Naive thymus-derived CD4-positive, alpha-beta T cell (primary cell): ENCODE measurements at regions of chr21 and their contacts with region 1.

Region 1: GRCh38 chr21:37267269-37268184 is at the start of gene VPS26C:
- DNase-seq: peak; percentile 91 to 98 (median 97)
- ATAC-seq: peak; percentile 93
- H3K4me3 ChIP-seq: peak within 1 kb of the TSS; percentile 95
- H3K4me3 Mint-ChIP-seq: peak within 1 kb of the TSS; percentile 88 to 96 (median 94)
- H3K27ac ChIP-seq: peak within 1 kb of the TSS; percentile 90
- H3K27ac Mint-ChIP-seq: peak within 1 kb of the TSS; percentile 94 to 99 (median 98)
- H3K4me1 ChIP-seq: peaks cover 5 to 7% of the 10 kb centered on the region in 2 donors
- H3K4me1 Mint-ChIP-seq: peaks cover 14 to 62% (median 46%) of the 10 kb centered on the region in 7 donors
- H3K27me3 ChIP-seq: no peaks in the 10 kb centered on the region
- H3K27me3 Mint-ChIP-seq: peaks cover 0 to 11% (median 0%) of the 10 kb centered on the region in 5 donors
- total RNA-seq, gene VPS26C: 46.8 to 83.5 (median 77.7) TPM

Region 2: GRCh38 chr21:36319765-36320420 is 947.6 kb before region 1 on chr21 and contains the start of gene MORC3:
- CTCF ChIA-PET with region 1: no interaction called
- POLR2A ChIA-PET with region 1: no interaction called
- intact Hi-C with region 1: loop called in 1 of 2 experiments (anchors 10 kb)
- DNase-seq: peak; percentile 95 to 98 (median 97)
- ATAC-seq: peak; percentile 96
- H3K4me3 ChIP-seq: peak within 1 kb of the TSS; percentile 78
- H3K4me3 Mint-ChIP-seq: peak within 1 kb of the TSS; percentile 90 to 100 (median 96)
- H3K27ac ChIP-seq: peak within 1 kb of the TSS; percentile 93
- H3K27ac Mint-ChIP-seq: peak within 1 kb of the TSS; percentile 94 to 99 (median 97)
- H3K4me1 ChIP-seq: peaks cover 11 to 22% of the 10 kb centered on the region in 2 donors
- H3K4me1 Mint-ChIP-seq: peaks cover 29 to 40% (median 37%) of the 10 kb centered on the region in 7 donors
- H3K27me3 ChIP-seq: no peaks in the 10 kb centered on the region
- H3K27me3 Mint-ChIP-seq: peaks cover 0 to 5% (median 0%) of the 10 kb centered on the region in 5 donors
- total RNA-seq, gene MORC3: 48.2 to 123 (median 62.0) TPM

Region 3: GRCh38 chr21:37072988-37073416 is 194.5 kb before region 1 on chr21 and contains the starts of genes PIGP and TTC3:
- CTCF ChIA-PET with region 1: no interaction called
- POLR2A ChIA-PET with region 1: no interaction called
- intact Hi-C with region 1: loop called (anchors 1 kb)
- DNase-seq: peak; percentile 93 to 99 (median 97)
- ATAC-seq: peak; percentile 79
- H3K4me3 ChIP-seq: peak within 1 kb of the TSS; percentile 76
- H3K4me3 Mint-ChIP-seq: peak within 1 kb of the TSS; percentile 88 to 100 (median 98)
- H3K27ac ChIP-seq: peak within 1 kb of the TSS; percentile 97
- H3K27ac Mint-ChIP-seq: peak within 1 kb of the TSS; percentile 91 to 100 (median 97)
- H3K4me1 ChIP-seq: peaks cover 22 to 23% of the 10 kb centered on the region in 2 donors
- H3K4me1 Mint-ChIP-seq: peaks cover 30 to 66% (median 59%) of the 10 kb centered on the region in 7 donors
- H3K27me3 ChIP-seq: no peaks in the 10 kb centered on the region
- H3K27me3 Mint-ChIP-seq: peaks cover 0 to 6% (median 0%) of the 10 kb centered on the region in 5 donors
- total RNA-seq, gene PIGP: 9.1 to 26.7 (median 15.3) TPM
- total RNA-seq, gene TTC3: 66.6 to 208 (median 154) TPM

Region 4: DNA sequence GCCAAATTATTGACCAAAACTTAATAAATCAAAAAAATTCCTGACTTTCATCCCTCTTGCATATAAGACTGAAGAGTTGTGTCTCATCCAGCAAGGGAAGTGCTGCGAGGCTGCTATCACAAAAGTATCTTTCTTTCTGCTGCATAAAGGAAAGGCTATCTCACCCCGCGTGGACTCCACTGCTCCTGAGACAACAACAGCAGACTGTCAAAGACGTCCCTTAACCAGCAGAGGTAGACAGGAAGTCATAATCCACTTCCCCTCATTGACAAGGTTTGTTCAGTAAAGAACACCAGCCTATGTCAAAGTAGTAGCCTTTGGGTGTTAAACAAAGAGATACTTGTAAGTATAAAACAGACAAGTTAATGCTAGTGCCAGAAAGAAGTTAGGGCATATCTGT is 29.8 kb before region 1 on chr21:
- CTCF ChIA-PET with region 1: no interaction called
- POLR2A ChIA-PET with region 1: interaction called, 4 read pairs
- intact Hi-C with region 1: loop called in 1 of 2 experiments (anchors 2 kb)
- DNase-seq: peak in 3 of 9 donors; percentile 16 to 21 (median 20)
- ATAC-seq: peak; percentile 60
- H3K4me3 ChIP-seq: no peak overlapping the region
- H3K4me3 Mint-ChIP-seq: peak overlapping the region in 5 of 10 donors; percentile 0 to 68 (median 27)
- H3K27ac ChIP-seq: peak overlapping the region; percentile 26
- H3K27ac Mint-ChIP-seq: peak overlapping the region; percentile 74 to 89 (median 88)
- H3K4me1 ChIP-seq: peaks cover 0 to 16% of the 10 kb centered on the region in 2 donors
- H3K4me1 Mint-ChIP-seq: peaks cover 23 to 57% (median 33%) of the 10 kb centered on the region in 7 donors
- H3K27me3 ChIP-seq: no peaks in the 10 kb centered on the region
- H3K27me3 Mint-ChIP-seq: no peaks in the 10 kb centered on the region

Region 5: DNA sequence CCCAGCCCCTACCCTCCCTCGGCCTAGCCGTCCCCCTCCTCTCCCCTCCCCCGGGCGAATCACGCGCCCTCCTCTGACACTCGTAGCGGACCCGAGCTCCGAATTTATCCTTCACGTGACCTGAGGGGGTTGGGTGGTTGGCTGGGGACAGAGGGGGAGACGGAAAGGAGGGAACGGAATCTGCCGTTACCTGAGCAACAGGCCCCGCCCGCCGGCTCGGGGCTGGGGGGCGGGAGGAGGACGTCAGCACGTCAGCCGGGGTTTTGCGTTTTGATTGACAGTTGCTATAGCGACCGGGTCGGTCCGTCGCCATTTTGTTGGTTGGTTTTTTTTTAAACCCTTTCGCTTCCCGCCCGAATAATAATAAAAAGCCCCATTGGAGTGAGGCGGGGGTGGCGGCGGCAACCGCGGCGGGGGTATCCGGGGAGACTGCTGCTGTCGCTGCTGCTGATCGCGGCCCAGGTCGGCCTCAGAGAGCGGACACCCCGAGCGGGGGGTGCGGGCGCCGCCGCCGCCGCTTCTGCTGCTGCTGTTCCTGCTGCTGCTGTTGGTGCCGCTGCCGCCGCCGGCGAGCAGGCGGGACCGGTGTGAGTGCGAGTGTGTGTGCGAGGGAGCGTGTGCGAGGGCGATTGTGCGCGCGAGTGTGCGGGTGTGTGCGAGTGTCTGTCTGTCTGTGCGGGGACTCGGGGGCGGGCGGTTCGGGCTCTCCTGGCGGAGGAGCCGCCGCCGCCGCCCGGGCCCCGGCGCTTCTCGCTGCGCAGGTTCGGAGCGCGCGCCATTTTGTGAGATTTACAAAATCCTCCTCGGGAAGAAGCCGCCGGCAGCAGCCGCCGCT is 99.2 kb after region 1 on chr21 and contains the start of gene DYRK1A:
- CTCF ChIA-PET with region 1: interaction called, 3 read pairs
- POLR2A ChIA-PET with region 1: interaction called, 37 read pairs
- intact Hi-C with region 1: loop called (anchors 1 kb)
- DNase-seq: peak; percentile 95 to 99 (median 99)
- ATAC-seq: peak; percentile 91
- H3K4me3 ChIP-seq: peak within 1 kb of the TSS; percentile 75
- H3K4me3 Mint-ChIP-seq: peak within 1 kb of the TSS; percentile 93 to 100 (median 100)
- H3K27ac ChIP-seq: peak within 1 kb of the TSS; percentile 99
- H3K27ac Mint-ChIP-seq: peak within 1 kb of the TSS; percentile 98 to 100 (median 100)
- H3K4me1 ChIP-seq: peaks cover 20 to 33% of the 10 kb centered on the region in 2 donors
- H3K4me1 Mint-ChIP-seq: peaks cover 34 to 53% (median 44%) of the 10 kb centered on the region in 7 donors
- H3K27me3 ChIP-seq: no peaks in the 10 kb centered on the region
- H3K27me3 Mint-ChIP-seq: peaks cover 0 to 5% (median 0%) of the 10 kb centered on the region in 5 donors
- total RNA-seq, gene DYRK1A: 86.0 to 142 (median 125) TPM

Region 6: DNA sequence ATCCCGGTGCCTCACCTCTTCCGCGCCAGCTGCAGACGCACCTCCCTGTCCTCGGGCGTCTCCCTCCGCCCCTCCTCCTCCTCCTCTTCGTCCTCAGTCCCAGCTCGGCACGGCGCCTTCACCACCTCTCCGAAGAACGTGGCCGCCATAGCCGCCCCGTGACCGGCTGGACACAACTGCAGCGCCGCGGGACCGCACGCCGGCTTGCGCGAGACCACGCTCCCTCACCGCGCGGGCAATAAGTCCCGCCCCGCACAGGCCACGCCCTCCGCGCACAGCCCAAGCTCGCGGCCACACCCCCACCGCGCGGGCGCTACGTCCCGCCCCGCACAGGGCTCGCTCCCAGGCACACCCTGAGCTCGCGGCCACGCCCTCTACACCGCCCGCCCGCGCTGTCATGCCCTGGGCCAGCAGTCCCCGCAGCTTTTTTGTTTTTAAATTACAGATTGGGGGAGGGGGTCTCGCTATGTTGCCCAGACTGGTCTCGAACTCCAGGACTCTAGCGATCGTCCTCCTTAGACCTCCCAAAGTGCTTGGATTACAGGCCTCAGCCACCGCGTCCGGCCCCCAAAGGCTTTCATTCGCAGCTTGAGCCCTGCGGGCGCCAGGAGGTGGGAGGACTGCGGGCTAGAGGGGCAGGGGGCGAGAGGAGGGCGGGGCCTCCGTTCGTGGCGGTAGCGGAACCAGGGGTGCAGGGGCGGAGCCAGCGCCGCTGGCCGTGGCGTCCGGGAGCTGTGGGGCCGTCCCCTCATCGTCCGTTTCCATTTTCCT is 1915.9 kb after region 1 on chr21 and contains the start of gene PSMG1:
- CTCF ChIA-PET with region 1: no interaction called
- POLR2A ChIA-PET with region 1: no interaction called
- intact Hi-C with region 1: loop called (anchors 5 to 10 kb)
- DNase-seq: peak; percentile 89 to 96 (median 94)
- ATAC-seq: peak; percentile 99
- H3K4me3 ChIP-seq: peak within 1 kb of the TSS; percentile 86
- H3K4me3 Mint-ChIP-seq: peak within 1 kb of the TSS; percentile 92 to 100 (median 97)
- H3K27ac ChIP-seq: peak within 1 kb of the TSS; percentile 93
- H3K27ac Mint-ChIP-seq: peak within 1 kb of the TSS; percentile 88 to 98 (median 95)
- H3K4me1 ChIP-seq: peaks cover 9% of the 10 kb centered on the region in 2 donors
- H3K4me1 Mint-ChIP-seq: peaks cover 28 to 78% (median 52%) of the 10 kb centered on the region in 7 donors
- H3K27me3 ChIP-seq: no peaks in the 10 kb centered on the region
- H3K27me3 Mint-ChIP-seq: no peaks in the 10 kb centered on the region
- total RNA-seq, gene PSMG1: 9.8 to 62.5 (median 16.9) TPM